ENCODE measurements at regions of chr7 and their contacts with region 1.

Region 1: GRCh38 chr7:111763221-111763801 is 201.0 kb upstream of the IMMP2L start:
- DNase-seq: no peak
- ATAC-seq: peak; percentile 64
- H3K4me3 ChIP-seq: no peak overlapping the region
- H3K27ac ChIP-seq: no peak overlapping the region
- H3K4me1 ChIP-seq: no peaks in the 10 kb centered on the region
- H3K27me3 ChIP-seq: no peaks in the 10 kb centered on the region
- CTCF ChIP-seq: peak; percentile 19 to 43 (median 24); a peak in 4 of 6 replicates
- EP300 ChIP-seq: no peak
- POLR2A ChIP-seq: no peak
- RAD21 ChIP-seq: peak; percentile 51

Region 2: DNA sequence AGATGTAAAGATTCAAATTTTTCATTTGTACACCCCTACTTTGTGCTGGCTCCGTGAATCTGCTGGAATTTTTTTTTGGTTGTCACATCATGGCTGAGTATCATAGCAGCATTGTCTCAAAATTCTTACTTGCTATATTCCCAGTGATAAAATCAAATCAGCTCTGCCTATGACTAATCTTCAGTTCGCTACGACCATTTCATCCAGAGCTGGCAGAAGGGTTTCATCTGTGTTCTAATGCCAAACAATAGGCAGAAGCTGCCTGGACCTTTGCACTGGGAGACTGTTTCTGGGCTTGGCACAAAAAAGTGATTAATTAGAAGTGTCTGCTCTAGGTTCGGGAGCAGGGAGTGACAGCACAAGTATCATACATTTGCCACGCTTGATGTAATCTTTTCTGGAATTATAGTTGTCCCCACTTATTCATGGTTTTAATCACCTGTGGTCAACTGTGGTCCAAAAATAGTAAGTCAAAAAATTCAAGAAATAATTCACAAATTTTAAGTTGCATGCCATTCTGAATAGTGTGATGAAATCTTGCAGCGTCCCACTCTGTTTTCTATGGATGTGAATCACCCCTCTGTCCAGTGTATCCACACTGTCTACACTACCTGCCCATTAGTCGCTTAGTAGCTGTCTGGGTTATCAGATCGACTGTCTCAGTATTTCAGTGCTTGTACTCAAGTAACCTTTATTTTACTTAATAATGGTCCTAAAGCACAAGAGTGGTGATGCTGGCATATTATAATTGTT is 80.5 kb before region 1 on chr7:
- CTCF ChIA-PET with region 1: no interaction called
- POLR2A ChIA-PET with region 1: no interaction called
- RAD21 ChIA-PET with region 1: no interaction called
- SMC1A ChIA-PET with region 1: no interaction called
- in situ Hi-C with region 1: no loop called
- intact Hi-C with region 1: no loop called
- DNase-seq: no peak
- ATAC-seq: no peak
- H3K4me3 ChIP-seq: no peak overlapping the region
- H3K27ac ChIP-seq: no peak overlapping the region
- H3K4me1 ChIP-seq: no peaks in the 10 kb centered on the region
- H3K27me3 ChIP-seq: no peaks in the 10 kb centered on the region; a peak in 2 of 4 replicates
- CTCF ChIP-seq: no peak
- EP300 ChIP-seq: no peak
- POLR2A ChIP-seq: no peak
- RAD21 ChIP-seq: no peak

Region 3: GRCh38 chr7:112414855-112415490 is 651.7 kb after region 1 on chr7:
- CTCF ChIA-PET with region 1: no interaction called
- POLR2A ChIA-PET with region 1: no interaction called
- RAD21 ChIA-PET with region 1: no interaction called
- SMC1A ChIA-PET with region 1: no interaction called
- in situ Hi-C with region 1: no loop called
- intact Hi-C with region 1: loop called (anchors 5 kb)
- DNase-seq: no peak
- ATAC-seq: peak; percentile 64
- H3K4me3 ChIP-seq: no peak overlapping the region
- H3K27ac ChIP-seq: no peak overlapping the region
- H3K4me1 ChIP-seq: no peaks in the 10 kb centered on the region
- H3K27me3 ChIP-seq: no peaks in the 10 kb centered on the region; a peak in 1 of 4 replicates
- CTCF ChIP-seq: peak; percentile 34 to 44 (median 43); a peak in 5 of 6 replicates
- EP300 ChIP-seq: no peak
- POLR2A ChIP-seq: no peak
- RAD21 ChIP-seq: peak; percentile 49

Measured in GM12878 (cell line).